Activated T-helper 2 cell treated with anti-CD3 and anti-CD28 coated beads, Interferon-gamma antibody, Interleukin-2, Interleukin-4, amounts not matched to agents 10 μg/mL and 5 μg/mL and 100 μg/mL, durations not matched to agents 14 hours and 24 hours and 36 hours (primary cell): ENCODE measurements at regions of chr12 and their contacts with region 1.

Region 1: DNA sequence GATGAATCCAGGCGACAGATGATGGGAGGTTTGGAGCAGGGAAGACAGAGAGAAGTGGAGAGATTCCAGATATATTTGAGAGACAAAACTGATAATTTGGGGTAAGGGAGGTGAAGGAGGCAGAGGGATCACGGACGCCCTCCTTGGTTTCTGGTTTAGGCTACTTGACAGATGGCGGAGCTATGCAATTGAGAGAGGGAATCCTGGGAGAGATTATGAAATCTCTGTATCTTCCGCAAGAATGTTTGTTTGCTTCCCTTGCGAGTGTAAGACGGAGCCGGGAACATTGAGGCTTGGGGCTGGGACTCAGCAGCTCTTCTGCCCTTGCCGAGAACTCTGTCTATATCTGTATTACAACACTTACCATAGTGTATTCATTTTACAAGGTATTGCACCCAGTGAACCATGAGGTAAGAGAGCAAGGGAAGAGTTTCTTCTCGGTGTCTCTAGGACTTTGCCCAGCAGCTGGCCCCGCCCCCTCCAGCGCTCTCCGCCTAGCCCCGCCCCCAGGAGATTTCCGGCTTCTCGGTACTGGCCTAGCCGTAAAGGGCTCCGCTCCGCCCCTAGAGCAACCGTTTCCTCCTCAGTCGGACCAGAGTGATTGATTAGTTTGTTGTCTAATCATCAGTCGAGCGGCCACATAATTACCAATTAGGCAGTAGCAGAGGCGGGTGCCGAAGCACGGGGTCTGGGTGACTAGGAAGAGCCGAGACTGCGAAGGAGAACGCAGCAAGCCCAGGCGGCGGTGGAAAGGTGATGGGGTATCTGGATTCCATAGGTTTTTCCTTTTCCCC is at the start of gene PRR13:
- DNase-seq: peak; percentile 96
- H3K4me3 Mint-ChIP-seq: peak within 1 kb of the TSS; percentile 97
- H3K27ac Mint-ChIP-seq: peak within 1 kb of the TSS; percentile 84
- H3K4me1 Mint-ChIP-seq: peaks cover 26% of the 10 kb centered on the region
- H3K27me3 Mint-ChIP-seq: no peaks in the 10 kb centered on the region
- total RNA-seq, gene PRR13: 178 and 198 TPM in 2 replicates

Region 2: GRCh38 chr12:53414756-53415417 is 26.4 kb before region 1 on chr12:
- intact Hi-C with region 1: loop called (anchors 2 kb)
- DNase-seq: no peak
- H3K4me3 Mint-ChIP-seq: no peak overlapping the region
- H3K27ac Mint-ChIP-seq: no peak overlapping the region
- H3K4me1 Mint-ChIP-seq: peaks cover 39% of the 10 kb centered on the region
- H3K27me3 Mint-ChIP-seq: no peaks in the 10 kb centered on the region

Region 3: DNA sequence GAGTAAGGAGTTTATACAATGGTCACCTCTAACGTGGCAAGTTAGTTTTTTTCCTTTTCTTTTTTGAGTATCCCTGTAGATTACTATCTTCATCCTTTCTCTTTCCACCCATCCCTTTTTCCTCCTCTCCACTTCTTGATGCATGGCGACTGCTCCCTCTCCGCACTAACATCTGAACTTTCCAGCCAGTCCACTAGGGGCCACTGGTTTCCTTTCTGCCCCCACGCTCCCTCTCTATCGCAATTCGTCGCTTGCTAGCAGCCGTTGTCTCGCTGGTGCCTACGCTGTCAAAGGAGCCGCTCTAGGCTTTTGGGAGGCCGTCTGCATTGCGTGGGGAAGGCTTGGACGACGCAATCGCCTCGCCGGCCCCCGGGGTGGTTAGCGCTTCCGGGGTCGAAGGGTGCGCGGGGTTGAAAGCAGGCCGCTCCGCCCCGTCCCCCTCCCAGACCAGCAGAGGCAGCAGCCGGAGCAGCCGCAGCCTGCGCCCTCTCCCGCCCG is 10.5 kb after region 1 on chr12 and contains the start of gene PCBP2:
- intact Hi-C with region 1: loop called (anchors 1 kb)
- DNase-seq: peak; percentile 97
- H3K4me3 Mint-ChIP-seq: peak within 1 kb of the TSS; percentile 100
- H3K27ac Mint-ChIP-seq: peak within 1 kb of the TSS; percentile 100
- H3K4me1 Mint-ChIP-seq: peaks cover 35% of the 10 kb centered on the region
- H3K27me3 Mint-ChIP-seq: no peaks in the 10 kb centered on the region
- total RNA-seq, gene PCBP2: 985 and 1,001 TPM in 2 replicates